ENCODE measurements at regions of chr3 and their contacts with region 1.

Region 1: DNA sequence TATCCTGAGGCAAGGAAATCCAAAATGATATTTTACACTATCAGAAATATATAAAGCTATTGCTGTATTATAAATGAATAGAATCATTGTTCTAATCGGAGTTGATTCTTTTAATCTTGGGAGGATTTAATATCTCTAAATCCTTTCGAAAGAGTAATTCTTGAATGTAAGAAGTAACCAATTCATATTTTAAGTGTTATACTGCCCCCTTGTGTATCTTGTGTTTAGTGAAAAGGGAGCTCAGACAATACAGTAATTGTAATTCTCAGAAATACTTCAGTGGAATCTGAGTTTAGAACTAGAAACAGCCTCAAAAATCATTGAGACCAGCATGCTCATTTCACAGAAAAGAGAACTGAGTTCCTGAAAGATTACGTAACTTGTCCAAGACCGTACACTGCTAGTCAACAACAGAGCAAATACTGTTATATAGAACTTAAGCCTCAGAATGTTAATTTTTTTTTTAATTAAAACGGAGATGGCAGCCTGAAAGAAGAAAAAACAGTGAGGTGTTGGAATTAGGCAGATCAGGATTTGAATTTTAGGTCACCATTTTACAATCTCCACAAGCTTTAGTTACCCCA is 42.9 kb downstream of the PLCH1 start:
- DNase-seq: peak; percentile 3
- H3K4me3 ChIP-seq: no peak overlapping the region
- CTCF ChIP-seq: peak; percentile 25

Region 2: GRCh38 chr3:155352900-155353490 is 349.0 kb before region 1 on chr3:
- CTCF ChIA-PET with region 1: interaction called, 112 read pairs
- POLR2A ChIA-PET with region 1: no interaction called
- DNase-seq: no peak
- H3K4me3 ChIP-seq: no peak overlapping the region
- CTCF ChIP-seq: peak; percentile 30

Region 3: DNA sequence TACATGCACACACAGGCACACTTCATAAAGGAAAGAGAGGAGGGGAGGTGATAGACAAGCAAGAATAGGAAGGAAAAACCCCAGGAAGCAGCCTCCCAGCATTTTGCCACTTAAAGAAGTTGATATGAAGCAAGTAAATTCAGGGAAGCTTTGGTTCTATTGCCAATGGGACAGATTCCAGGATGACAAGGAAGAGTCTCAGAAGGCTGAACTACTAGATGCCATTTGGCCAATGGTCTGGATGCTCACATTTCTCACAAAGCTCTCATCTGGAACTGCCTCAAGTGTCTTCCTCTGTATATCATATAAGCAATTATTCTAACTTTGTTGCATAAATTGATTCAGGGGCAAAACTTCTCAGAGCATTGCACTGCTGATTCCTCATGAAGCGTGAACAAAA is 329.7 kb before region 1 on chr3:
- CTCF ChIA-PET with region 1: interaction called, 298 read pairs
- POLR2A ChIA-PET with region 1: no interaction called
- DNase-seq: no peak
- H3K4me3 ChIP-seq: no peak overlapping the region
- CTCF ChIP-seq: no peak

Region 4: DNA sequence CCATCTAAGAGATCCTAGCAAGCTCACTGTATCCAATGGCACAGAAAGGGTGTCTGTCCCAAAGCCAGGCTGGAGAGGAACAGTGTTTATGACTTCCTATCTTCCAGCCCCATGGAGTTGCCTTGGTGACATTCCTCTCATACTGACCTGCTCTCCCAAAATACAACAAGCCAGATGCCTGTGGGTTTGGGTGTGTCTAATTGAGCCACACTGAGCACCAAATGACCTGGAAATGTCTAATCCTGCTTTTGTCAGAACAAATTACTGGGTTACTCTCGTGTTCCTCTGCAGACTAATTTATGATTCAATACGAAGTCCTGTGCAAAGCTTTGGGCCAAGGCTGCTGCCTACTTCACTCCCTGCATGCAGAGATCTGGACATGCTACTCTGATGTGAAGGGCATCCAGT is 310.4 kb before region 1 on chr3:
- CTCF ChIA-PET with region 1: interaction called, 298 read pairs
- POLR2A ChIA-PET with region 1: no interaction called
- DNase-seq: peak; percentile 36
- H3K4me3 ChIP-seq: no peak overlapping the region
- CTCF ChIP-seq: no peak

Region 5: GRCh38 chr3:155682426-155683343 is 19.3 kb before region 1 on chr3:
- CTCF ChIA-PET with region 1: interaction called, 33 read pairs
- POLR2A ChIA-PET with region 1: no interaction called
- DNase-seq: no peak
- H3K4me3 ChIP-seq: no peak overlapping the region
- CTCF ChIP-seq: no peak

Region 6: DNA sequence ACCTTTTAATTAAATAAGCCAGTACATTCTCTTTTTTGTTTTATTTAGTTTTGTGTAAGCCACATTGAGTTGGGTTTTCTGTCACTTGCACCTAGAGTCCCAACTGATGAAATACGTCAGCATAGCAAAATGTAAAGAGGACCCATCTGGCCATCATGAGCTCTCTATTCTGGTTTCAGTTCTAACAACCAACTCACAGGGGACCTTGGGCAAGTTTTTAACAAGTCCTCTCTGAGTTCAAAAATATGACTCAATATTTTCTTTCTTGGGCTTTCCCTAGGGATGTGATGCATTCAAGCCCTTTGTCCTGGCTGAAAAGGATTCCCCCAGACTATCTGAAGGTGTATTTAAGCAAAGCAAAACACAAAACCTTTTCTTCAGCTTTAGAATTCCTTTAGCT is 10.0 kb after region 1 on chr3:
- CTCF ChIA-PET with region 1: interaction called, 49 read pairs
- POLR2A ChIA-PET with region 1: no interaction called
- DNase-seq: no peak
- H3K4me3 ChIP-seq: no peak overlapping the region
- CTCF ChIP-seq: no peak

Region 7: GRCh38 chr3:155791190-155791589 is 89.2 kb after region 1 on chr3:
- CTCF ChIA-PET with region 1: no interaction called
- POLR2A ChIA-PET with region 1: no interaction called
- DNase-seq: no peak
- H3K4me3 ChIP-seq: no peak overlapping the region
- CTCF ChIP-seq: no peak

Region 8: GRCh38 chr3:156070028-156070427 is 368.1 kb after region 1 on chr3:
- CTCF ChIA-PET with region 1: no interaction called
- POLR2A ChIA-PET with region 1: no interaction called
- DNase-seq: no peak
- H3K4me3 ChIP-seq: no peak overlapping the region
- CTCF ChIP-seq: no peak

Measured in AG04449 (cell line).